MCF 10A (cell line): ENCODE measurements at regions of chr5 and their contacts with region 1.

Region 1: GRCh38 chr5:43389679-43390329 is 22.4 kb downstream of the CCL28 start:
- DNase-seq: peak; percentile 90
- H3K4me3 Mint-ChIP-seq: no peak overlapping the region
- H3K27ac Mint-ChIP-seq: no peak overlapping the region
- H3K4me1 Mint-ChIP-seq: no peaks in the 10 kb centered on the region
- H3K27me3 Mint-ChIP-seq: no peaks in the 10 kb centered on the region
- CTCF ChIP-seq: peak; percentile 78

Region 2: DNA sequence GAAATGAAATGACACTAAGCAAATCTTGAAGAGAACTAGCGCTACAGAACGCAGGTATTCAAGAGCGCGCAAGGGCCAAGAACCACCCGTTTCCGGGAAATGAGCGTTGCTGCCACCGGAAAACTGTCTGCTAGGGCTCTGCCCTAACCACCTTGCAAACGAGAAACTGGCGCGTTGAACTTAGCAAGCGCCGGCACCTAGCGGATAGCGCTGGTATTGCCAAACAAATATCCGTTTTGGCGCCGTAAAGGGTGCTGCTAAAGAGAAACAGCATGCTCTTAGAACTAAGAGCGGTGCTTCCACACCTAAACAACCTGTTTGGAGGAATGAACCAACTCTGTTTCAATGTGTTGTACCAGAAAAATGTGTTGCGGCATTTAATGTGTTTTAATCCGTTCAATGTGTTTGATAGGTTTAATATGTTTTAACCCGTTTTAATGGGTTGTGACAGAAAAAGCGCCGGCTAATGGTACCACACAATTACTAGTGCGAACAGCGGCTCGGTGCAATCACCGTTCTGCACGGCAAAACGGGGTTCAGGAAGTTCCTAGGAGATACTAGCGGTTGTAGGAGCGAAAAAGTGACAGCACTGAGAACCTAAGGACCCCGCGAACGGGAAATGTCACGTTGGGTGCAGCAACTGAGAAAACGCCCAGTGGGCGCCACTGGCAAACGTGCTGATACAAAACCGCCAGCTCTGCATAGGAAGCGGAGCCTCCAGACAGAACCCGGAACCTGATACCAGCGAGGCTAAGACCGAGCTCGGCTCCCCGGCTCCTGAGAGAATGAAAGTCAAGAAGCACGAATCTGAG is 349.3 kb before region 1 on chr5 and contains the start of gene ANXA2R:
- CTCF ChIA-PET with region 1: no interaction called
- POLR2A ChIA-PET with region 1: no interaction called
- intact Hi-C with region 1: loop called (anchors 1 kb)
- DNase-seq: no peak
- H3K4me3 Mint-ChIP-seq: peak within 1 kb of the TSS; percentile 88
- H3K27ac Mint-ChIP-seq: peak within 1 kb of the TSS; percentile 95
- H3K4me1 Mint-ChIP-seq: no peaks in the 10 kb centered on the region
- H3K27me3 Mint-ChIP-seq: no peaks in the 10 kb centered on the region
- CTCF ChIP-seq: no peak
- total RNA-seq, gene ANXA2R: 0.98 and 1.3 TPM in 2 replicates

Region 3: GRCh38 chr5:43105369-43106289 is 284.2 kb before region 1 on chr5:
- CTCF ChIA-PET with region 1: interaction called, 36 read pairs
- POLR2A ChIA-PET with region 1: interaction called, 3 read pairs
- intact Hi-C with region 1: loop called (anchors 1 kb)
- DNase-seq: peak; percentile 94
- H3K4me3 Mint-ChIP-seq: peak overlapping the region; percentile 78
- H3K27ac Mint-ChIP-seq: peak overlapping the region; percentile 79
- H3K4me1 Mint-ChIP-seq: peaks cover 12% of the 10 kb centered on the region
- H3K27me3 Mint-ChIP-seq: no peaks in the 10 kb centered on the region
- CTCF ChIP-seq: peak; percentile 99

Region 4: GRCh38 chr5:43236653-43237355 is 153.0 kb before region 1 on chr5:
- CTCF ChIA-PET with region 1: interaction called, 53 read pairs
- POLR2A ChIA-PET with region 1: no interaction called
- intact Hi-C with region 1: no loop called
- DNase-seq: peak; percentile 14
- H3K4me3 Mint-ChIP-seq: no peak overlapping the region
- H3K27ac Mint-ChIP-seq: no peak overlapping the region
- H3K4me1 Mint-ChIP-seq: peaks cover 2% of the 10 kb centered on the region
- H3K27me3 Mint-ChIP-seq: peaks cover 16% of the 10 kb centered on the region
- CTCF ChIP-seq: no peak

Region 5: GRCh38 chr5:43313035-43313853 is 76.6 kb before region 1 on chr5 and contains the start of gene HMGCS1:
- CTCF ChIA-PET with region 1: interaction called, 83 read pairs
- POLR2A ChIA-PET with region 1: interaction called, 44 read pairs
- intact Hi-C with region 1: no loop called
- DNase-seq: peak; percentile 99
- H3K4me3 Mint-ChIP-seq: peak within 1 kb of the TSS; percentile 100
- H3K27ac Mint-ChIP-seq: peak within 1 kb of the TSS; percentile 96
- H3K4me1 Mint-ChIP-seq: peaks cover 53% of the 10 kb centered on the region
- H3K27me3 Mint-ChIP-seq: no peaks in the 10 kb centered on the region
- CTCF ChIP-seq: no peak
- total RNA-seq, gene HMGCS1: 36.2 and 42.6 TPM in 2 replicates

Region 6: GRCh38 chr5:43376496-43377140 is 13.2 kb before region 1 on chr5:
- CTCF ChIA-PET with region 1: interaction called, 12 read pairs
- POLR2A ChIA-PET with region 1: no interaction called
- intact Hi-C with region 1: no loop called
- DNase-seq: no peak
- H3K4me3 Mint-ChIP-seq: no peak overlapping the region
- H3K27ac Mint-ChIP-seq: no peak overlapping the region
- H3K4me1 Mint-ChIP-seq: no peaks in the 10 kb centered on the region
- H3K27me3 Mint-ChIP-seq: no peaks in the 10 kb centered on the region
- CTCF ChIP-seq: no peak

Region 7: DNA sequence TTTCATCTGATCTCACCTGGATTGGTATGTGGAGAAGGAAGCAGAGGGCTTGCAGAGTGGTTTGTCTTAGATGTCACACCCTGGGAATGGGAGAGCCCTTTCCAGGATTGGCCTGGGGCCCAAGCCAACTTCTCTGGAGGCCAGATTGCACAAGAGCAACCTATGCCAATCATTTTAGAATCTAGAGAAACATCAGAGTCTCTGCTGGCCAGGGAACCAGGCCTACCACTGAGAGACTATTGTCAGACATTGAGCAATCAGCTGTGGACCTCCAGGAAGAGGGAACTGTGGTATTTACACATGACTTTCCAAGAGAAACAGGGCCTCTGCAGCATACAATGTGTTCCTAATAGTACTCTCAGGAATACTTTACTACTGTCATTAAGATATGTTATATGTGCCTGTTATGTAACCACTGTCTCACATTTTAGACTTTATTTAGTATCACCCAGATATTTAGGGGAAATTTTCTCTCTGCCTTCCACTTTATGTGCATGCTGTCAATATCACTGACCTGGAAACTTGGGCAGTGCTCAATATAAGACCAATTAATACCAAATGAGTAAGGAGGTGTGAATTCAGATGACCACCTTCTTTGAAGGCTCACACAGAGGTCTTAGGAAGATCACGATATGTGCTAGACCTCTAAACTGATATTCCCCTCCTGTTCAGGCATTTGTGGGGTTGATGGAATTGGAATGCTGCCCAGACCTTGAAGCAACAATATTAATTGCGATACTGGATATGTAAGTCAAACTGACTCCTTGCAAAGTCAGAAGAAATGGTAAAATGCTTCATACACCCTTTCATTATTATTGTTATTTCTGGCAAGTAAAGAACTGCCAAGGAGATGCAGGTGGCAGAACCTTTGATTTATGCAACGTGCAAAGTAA is 42.9 kb after region 1 on chr5:
- CTCF ChIA-PET with region 1: interaction called, 15 read pairs
- POLR2A ChIA-PET with region 1: no interaction called
- intact Hi-C with region 1: no loop called
- DNase-seq: peak; percentile 99
- H3K4me3 Mint-ChIP-seq: peak overlapping the region; percentile 28
- H3K27ac Mint-ChIP-seq: peak overlapping the region; percentile 53
- H3K4me1 Mint-ChIP-seq: peaks cover 43% of the 10 kb centered on the region
- H3K27me3 Mint-ChIP-seq: no peaks in the 10 kb centered on the region
- CTCF ChIP-seq: no peak

Region 8: GRCh38 chr5:43582082-43583005 is 192.5 kb after region 1 on chr5:
- CTCF ChIA-PET with region 1: no interaction called
- POLR2A ChIA-PET with region 1: no interaction called
- intact Hi-C with region 1: no loop called
- DNase-seq: no peak
- H3K4me3 Mint-ChIP-seq: no peak overlapping the region
- H3K27ac Mint-ChIP-seq: no peak overlapping the region
- H3K4me1 Mint-ChIP-seq: no peaks in the 10 kb centered on the region
- H3K27me3 Mint-ChIP-seq: no peaks in the 10 kb centered on the region
- CTCF ChIP-seq: no peak

Region 9: DNA sequence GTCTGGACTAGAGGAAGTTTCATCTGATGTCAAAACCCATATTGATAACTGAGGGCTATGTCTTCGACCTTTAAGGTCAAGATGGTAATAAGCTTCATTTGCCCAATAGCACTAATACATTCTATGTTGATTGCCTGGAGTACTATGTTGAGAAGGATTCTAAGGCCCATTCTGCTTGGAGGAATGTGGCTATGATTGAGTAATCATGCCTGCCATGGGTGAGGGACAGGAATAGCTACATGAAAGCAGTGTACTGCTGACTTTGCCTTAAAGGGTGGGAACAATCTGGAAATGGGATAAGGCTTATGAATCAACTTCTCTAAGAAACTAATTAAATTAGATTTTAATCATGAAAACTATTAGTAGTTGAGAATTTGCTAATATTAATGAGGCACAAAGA is 226.7 kb after region 1 on chr5:
- CTCF ChIA-PET with region 1: no interaction called
- POLR2A ChIA-PET with region 1: no interaction called
- intact Hi-C with region 1: no loop called
- DNase-seq: peak; percentile 55
- H3K4me3 Mint-ChIP-seq: no peak overlapping the region
- H3K27ac Mint-ChIP-seq: no peak overlapping the region
- H3K4me1 Mint-ChIP-seq: peaks cover 14% of the 10 kb centered on the region
- H3K27me3 Mint-ChIP-seq: no peaks in the 10 kb centered on the region
- CTCF ChIP-seq: no peak